ENCODE measurements at regions of chr1 and their contacts with region 1.

Region 1: GRCh38 chr1:201691716-201692554 is 137.0 kb upstream of the IPO9 start:
- DNase-seq: no peak
- H3K4me3 ChIP-seq: no peak overlapping the region
- H3K27ac ChIP-seq: no peak overlapping the region
- H3K4me1 ChIP-seq: peaks cover 6 to 11% of the 10 kb centered on the region in 2 donors
- H3K27me3 ChIP-seq: no peaks in the 10 kb centered on the region
- CTCF ChIP-seq: no peak
- POLR2A ChIP-seq: no peak

Region 2: DNA sequence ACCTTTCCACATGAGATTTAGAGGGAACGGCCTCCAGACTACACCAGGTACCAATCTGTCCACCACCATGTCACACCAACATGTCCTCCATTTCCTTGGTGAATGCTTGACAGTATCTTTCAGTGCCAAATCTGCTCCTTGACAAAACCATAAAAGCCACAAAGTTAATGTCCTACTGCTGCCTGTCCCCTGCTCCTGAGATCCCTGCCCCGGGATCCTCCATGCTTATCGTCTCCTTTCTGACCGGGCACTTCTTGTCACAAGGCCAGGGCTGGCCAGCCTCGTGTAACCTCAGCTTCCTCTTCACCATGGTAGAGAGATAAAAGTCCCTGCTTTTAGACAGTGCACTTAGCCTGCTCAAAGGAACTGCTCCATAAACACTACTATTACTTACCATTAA is 16.8 kb before region 1 on chr1:
- intact Hi-C with region 1: loop called (anchors 2 kb)
- DNase-seq: no peak
- H3K4me3 ChIP-seq: no peak overlapping the region
- H3K27ac ChIP-seq: no peak overlapping the region
- H3K4me1 ChIP-seq: no peaks in the 10 kb centered on the region
- H3K27me3 ChIP-seq: no peaks in the 10 kb centered on the region
- CTCF ChIP-seq: no peak
- POLR2A ChIP-seq: no peak

Region 3: DNA sequence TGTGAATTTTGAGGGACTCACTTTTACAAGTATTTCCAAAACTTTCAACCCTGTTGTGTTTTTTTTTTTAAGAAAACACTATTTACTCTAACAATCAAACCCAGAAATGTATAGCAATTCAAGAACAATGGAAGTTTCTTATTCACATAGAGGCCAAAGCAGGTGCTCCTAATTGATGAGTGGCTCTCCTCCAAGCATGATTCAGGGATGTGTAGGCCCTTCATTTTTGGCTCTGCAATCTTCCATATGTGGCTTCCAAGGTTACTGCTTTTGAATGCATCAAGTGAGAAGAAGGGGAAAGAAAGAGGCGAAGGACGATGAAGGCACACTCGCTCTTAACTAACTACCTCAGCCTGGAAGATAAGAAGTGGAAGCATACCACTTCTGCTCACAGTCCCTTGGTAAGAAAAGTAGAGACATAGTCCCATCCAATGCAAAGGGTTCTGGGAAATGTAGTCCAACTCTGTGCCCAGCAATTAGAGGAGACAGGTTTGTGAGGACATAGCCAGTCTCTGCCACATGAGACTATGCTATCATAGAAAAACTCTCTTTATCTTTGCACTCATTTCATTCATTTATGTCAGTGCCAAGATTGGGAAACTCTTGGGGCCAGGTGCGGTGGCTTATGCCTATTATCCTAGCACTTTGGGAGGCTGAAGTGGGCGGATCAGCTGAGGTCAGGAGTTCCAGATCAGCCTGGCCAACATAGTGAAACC is 1848.1 kb after region 1 on chr1:
- intact Hi-C with region 1: no loop called
- DNase-seq: no peak
- H3K4me3 ChIP-seq: no peak overlapping the region
- H3K27ac ChIP-seq: no peak overlapping the region
- H3K4me1 ChIP-seq: no peaks in the 10 kb centered on the region
- H3K27me3 ChIP-seq: no peaks in the 10 kb centered on the region
- CTCF ChIP-seq: no peak
- POLR2A ChIP-seq: no peak

Region 4: GRCh38 chr1:203558064-203558760 is 1866.3 kb after region 1 on chr1:
- intact Hi-C with region 1: no loop called
- DNase-seq: no peak
- H3K4me3 ChIP-seq: no peak overlapping the region
- H3K27ac ChIP-seq: peak overlapping the region; percentile 80 to 85
- H3K4me1 ChIP-seq: no peaks in the 10 kb centered on the region
- H3K27me3 ChIP-seq: no peaks in the 10 kb centered on the region
- CTCF ChIP-seq: no peak
- POLR2A ChIP-seq: no peak